ENCODE measurements at regions of chr19 and their contacts with region 1.

Region 1: DNA sequence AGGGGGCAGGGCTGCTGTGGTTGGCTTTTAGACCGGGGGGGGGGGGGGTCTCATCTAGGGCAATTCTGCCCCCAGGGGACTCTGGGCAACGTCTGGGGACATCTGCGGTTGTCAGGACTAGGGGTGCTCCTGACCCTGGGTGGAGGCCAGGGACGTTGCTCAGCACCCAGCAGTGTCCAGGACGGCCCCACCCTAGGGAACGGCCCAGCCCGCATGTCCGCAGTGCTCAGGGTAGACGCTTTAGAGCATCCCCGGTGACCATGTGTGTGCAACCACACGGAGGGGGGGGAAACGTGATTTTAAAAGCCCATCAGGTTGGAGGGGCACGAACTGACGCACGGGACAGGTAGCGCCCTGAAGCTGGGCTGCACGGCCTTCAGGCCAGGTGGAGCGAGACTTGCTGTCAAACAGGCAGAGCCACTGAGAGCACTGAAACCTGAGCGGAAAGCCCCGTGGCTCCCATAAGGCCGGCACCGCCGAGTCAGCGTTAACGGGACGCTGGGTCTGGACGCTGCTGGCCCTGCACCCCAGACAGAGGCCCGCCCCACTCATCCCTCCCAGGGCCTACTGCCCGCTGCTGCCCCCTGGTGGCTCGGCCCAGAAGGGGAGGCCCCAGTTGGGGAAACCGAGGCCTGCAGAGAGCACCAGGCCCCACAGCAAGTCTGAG is 8.3 kb downstream of the CACTIN start:
- DNase-seq: peak; percentile 62
- ATAC-seq: peak; percentile 78
- H3K4me3 Mint-ChIP-seq: no peak overlapping the region
- H3K27ac Mint-ChIP-seq: no peak overlapping the region
- H3K4me1 Mint-ChIP-seq: peaks cover 9% of the 10 kb centered on the region
- H3K27me3 Mint-ChIP-seq: no peaks in the 10 kb centered on the region
- CTCF ChIP-seq: peak; percentile 98

Region 2: GRCh38 chr19:3586124-3586626 is 32.1 kb before region 1 on chr19:
- CTCF ChIA-PET with region 1: interaction called, 16 read pairs
- POLR2A ChIA-PET with region 1: no interaction called
- intact Hi-C with region 1: no loop called
- DNase-seq: peak; percentile 60
- ATAC-seq: peak; percentile 47
- H3K4me3 Mint-ChIP-seq: no peak overlapping the region
- H3K27ac Mint-ChIP-seq: no peak overlapping the region
- H3K4me1 Mint-ChIP-seq: no peaks in the 10 kb centered on the region
- H3K27me3 Mint-ChIP-seq: no peaks in the 10 kb centered on the region
- CTCF ChIP-seq: peak; percentile 84

Region 3: DNA sequence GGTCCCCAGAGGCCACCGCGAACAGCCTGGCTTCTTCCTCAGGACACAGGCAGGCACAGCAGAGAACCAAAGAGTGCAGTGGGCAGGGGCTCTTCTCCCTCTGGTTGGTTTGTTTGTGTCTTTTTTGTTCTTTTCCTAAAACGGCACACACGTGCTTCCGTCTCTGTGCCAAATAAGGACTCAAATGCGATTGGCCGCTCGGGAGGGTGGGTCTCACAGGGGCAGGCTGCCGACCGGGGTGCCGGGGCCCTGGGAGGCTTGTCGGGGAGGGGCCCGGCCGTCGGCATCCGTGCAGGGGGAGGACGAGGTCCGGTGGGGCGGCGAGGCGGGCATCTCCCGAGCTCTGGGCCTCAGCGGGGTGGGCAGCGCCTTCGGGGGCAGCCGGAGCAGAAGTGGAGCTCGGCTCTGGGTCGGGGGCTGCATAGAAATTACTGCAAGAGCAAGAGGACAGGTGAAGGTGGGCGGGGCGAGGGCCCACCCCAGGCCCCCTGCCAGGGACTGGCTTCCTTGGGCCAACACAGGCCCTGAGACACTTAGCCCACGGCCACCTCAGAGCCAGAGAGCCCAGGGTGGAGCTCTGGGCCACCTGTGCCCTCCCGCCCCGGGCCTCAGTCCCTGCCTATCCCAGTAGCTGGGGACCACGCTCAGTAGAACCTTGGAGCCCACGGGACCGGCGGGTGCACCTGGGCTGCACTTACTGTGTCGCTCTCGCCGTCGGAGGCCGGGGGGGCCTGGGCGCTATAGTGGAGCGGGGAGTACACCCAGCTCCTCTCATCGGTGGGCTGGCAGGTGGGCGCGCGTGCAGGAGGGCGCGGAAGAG is 14.7 kb after region 1 on chr19:
- CTCF ChIA-PET with region 1: no interaction called
- POLR2A ChIA-PET with region 1: no interaction called
- intact Hi-C with region 1: no loop called
- DNase-seq: no peak
- ATAC-seq: no peak
- H3K4me3 Mint-ChIP-seq: no peak overlapping the region
- H3K27ac Mint-ChIP-seq: no peak overlapping the region
- H3K4me1 Mint-ChIP-seq: no peaks in the 10 kb centered on the region
- H3K27me3 Mint-ChIP-seq: no peaks in the 10 kb centered on the region
- CTCF ChIP-seq: no peak